PC-9 (cell line): ENCODE measurements at regions of chr6 and their contacts with region 1.

Region 1: DNA sequence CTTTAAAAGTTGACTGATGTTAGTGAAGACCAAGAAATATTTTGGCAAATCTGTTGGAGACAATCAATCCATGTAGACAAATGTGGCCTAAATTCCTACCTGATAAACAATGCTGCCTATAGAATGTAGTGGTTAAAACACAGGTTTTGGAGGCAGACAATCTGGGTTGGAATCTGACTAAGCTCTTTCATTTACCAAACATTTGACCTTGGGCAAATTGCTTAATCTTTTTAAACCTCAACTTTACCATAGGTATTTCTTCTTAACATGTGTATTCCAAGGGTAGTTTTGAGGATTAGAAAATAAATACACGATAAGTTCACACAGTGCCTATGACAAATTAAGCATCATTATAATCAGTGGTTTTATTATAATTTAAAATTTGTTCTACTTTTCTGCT is 11.5 kb downstream of the RHAG start:
- DNase-seq: no peak
- H3K4me3 ChIP-seq: no peak overlapping the region
- H3K27ac ChIP-seq: no peak overlapping the region
- H3K4me1 ChIP-seq: no peaks in the 10 kb centered on the region
- H3K27me3 ChIP-seq: no peaks in the 10 kb centered on the region
- CTCF ChIP-seq: no peak

Region 2: DNA sequence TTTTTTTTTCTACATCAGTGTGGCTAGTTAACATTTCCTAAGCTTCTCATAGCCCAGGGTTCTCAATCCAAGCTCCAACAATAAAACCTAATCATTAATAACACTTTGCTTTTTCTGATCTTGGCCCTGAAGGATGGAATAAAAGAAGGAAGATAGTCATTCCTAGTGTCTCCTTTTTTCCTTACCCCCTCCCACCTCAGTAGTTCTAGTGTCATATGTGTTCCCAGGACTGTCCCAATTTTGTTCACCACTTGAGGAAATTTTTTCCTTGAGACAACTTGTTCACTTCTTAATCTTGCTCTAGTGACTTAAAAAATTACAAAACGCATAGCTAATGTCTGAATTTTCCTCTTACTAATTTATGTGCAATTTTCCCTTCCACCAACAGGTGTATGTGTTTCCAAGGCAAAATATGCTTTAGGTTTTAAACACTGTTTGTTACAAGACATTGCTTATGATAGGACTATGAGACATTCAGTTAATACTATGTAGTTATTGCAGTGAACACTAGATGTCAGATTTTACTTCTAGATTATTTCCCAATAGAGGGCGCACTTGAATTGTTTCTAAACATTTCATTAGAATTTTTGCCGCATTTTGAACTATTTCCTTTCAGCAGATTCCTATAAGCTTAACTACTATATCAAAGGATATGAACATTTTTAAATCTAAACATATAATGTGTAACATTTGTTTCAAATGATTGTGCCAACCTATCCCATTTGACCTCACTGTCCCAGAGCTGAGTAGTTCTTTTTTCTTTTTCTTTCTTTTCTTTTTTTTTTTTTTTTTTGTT is 93.2 kb before region 1 on chr6:
- CTCF ChIA-PET with region 1: interaction called, 4 read pairs
- POLR2A ChIA-PET with region 1: no interaction called
- intact Hi-C with region 1: loop called (anchors 5 kb)
- DNase-seq: peak in 1 of 2 experiments; percentile 79
- H3K4me3 ChIP-seq: peak overlapping the region; percentile 30; the same call in 1 of the 2 replicates
- H3K27ac ChIP-seq: no peak overlapping the region
- H3K4me1 ChIP-seq: 0 out of 2 replicates have a peak, but pooled peaks cover 5% of the 10 kb centered on the region
- H3K27me3 ChIP-seq: no peaks in the 10 kb centered on the region
- CTCF ChIP-seq: peak; percentile 84

Region 3: DNA sequence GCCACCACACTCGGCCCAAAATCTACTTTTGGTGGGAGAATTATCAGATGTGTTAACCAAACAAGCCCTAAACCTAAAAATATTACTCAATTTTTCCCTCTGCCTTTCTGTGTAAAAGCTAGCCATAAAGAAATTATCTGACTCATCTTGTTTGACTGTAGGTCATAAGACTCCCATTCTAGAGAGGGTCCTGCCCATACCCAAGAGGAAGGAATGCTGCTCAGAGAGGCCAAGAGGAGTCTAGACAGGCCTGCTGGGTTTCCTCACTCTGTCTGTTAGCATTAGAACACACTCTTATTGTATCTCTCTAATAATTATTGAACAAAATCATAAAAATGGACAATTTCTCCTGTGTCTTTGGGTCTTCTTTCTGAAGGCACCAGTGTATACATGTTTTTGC is 48.5 kb before region 1 on chr6:
- CTCF ChIA-PET with region 1: no interaction called
- POLR2A ChIA-PET with region 1: no interaction called
- intact Hi-C with region 1: no loop called
- DNase-seq: no peak
- H3K4me3 ChIP-seq: no peak overlapping the region
- H3K27ac ChIP-seq: no peak overlapping the region
- H3K4me1 ChIP-seq: no peaks in the 10 kb centered on the region
- H3K27me3 ChIP-seq: no peaks in the 10 kb centered on the region
- CTCF ChIP-seq: no peak

Region 4: DNA sequence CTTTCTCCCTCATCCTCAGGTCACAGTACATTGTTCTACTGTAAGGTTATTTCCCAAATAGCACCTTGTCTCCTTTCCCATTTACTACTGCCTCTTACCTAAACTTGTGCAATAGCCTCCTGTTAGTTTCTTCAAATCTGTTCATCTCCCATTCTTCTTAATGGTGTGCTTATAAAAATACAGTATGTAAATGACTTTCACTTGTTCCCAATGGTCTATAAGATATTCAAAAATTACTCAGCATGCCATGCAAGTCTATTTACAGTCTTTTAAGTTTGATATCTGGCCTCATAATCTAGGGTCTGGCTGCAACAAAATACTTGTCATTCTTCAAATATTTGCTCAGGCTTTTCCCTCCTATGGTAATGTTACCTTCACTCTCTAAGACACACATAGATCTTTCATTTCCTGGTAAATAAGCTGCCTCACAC is 43.0 kb after region 1 on chr6:
- CTCF ChIA-PET with region 1: no interaction called
- POLR2A ChIA-PET with region 1: no interaction called
- intact Hi-C with region 1: loop called (anchors 5 kb)
- DNase-seq: peak; percentile 4 to 82
- H3K4me3 ChIP-seq: no peak overlapping the region
- H3K27ac ChIP-seq: peak overlapping the region; percentile 55; the same call in 1 of the 2 replicates
- H3K4me1 ChIP-seq: peaks cover 25% of the 10 kb centered on the region
- H3K27me3 ChIP-seq: no peaks in the 10 kb centered on the region
- CTCF ChIP-seq: no peak

Region 5: GRCh38 chr6:49849213-49849907 is 224.2 kb after region 1 on chr6:
- CTCF ChIA-PET with region 1: interaction called, 5 read pairs
- POLR2A ChIA-PET with region 1: no interaction called
- intact Hi-C with region 1: loop called (anchors 1 kb)
- DNase-seq: peak; percentile 5 to 43
- H3K4me3 ChIP-seq: no peak overlapping the region
- H3K27ac ChIP-seq: no peak overlapping the region
- H3K4me1 ChIP-seq: no peaks in the 10 kb centered on the region
- H3K27me3 ChIP-seq: no peaks in the 10 kb centered on the region
- CTCF ChIP-seq: peak; percentile 83

Region 6: GRCh38 chr6:50007821-50008220 is 382.7 kb after region 1 on chr6:
- CTCF ChIA-PET with region 1: no interaction called
- POLR2A ChIA-PET with region 1: no interaction called
- intact Hi-C with region 1: loop called (anchors 10 kb)
- DNase-seq: peak in 1 of 2 experiments; percentile 43
- H3K4me3 ChIP-seq: no peak overlapping the region
- H3K27ac ChIP-seq: no peak overlapping the region
- H3K4me1 ChIP-seq: no peaks in the 10 kb centered on the region
- H3K27me3 ChIP-seq: no peaks in the 10 kb centered on the region
- CTCF ChIP-seq: no peak